MCF 10A (cell line): ENCODE measurements at regions of chr1 and their contacts with region 1.

Region 1: GRCh38 chr1:150259758-150260669 is 2.4 kb downstream of the CA14 start:
- DNase-seq: peak; percentile 89
- H3K4me3 Mint-ChIP-seq: peak overlapping the region; percentile 64
- H3K27ac Mint-ChIP-seq: peak overlapping the region; percentile 47
- H3K4me1 Mint-ChIP-seq: peaks cover 66% of the 10 kb centered on the region
- H3K27me3 Mint-ChIP-seq: no peaks in the 10 kb centered on the region
- CTCF ChIP-seq: no peak

Region 2: DNA sequence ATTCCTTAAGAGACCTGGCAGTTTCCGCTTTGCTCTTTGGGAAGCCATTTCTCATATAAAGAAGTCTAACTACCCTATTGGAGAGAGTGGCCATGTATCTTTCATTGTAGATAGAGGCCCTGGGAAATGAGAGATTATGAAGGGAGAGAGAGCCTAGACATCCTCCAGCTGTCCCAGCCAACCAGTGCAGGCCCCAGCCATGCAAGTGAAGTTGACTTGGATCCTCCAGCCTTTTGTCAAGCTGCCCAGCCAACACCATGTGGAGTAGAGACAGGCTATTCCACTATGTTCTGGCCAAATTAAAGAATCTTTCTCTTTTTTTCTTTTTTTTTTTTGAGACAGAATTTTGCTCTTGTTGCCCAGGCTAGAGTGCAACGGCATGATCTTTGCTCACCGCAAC is 17.0 kb before region 1 on chr1:
- CTCF ChIA-PET with region 1: interaction called, 34 read pairs
- POLR2A ChIA-PET with region 1: interaction called, 4 read pairs
- intact Hi-C with region 1: no loop called
- DNase-seq: no peak
- H3K4me3 Mint-ChIP-seq: no peak overlapping the region
- H3K27ac Mint-ChIP-seq: no peak overlapping the region
- H3K4me1 Mint-ChIP-seq: no peaks in the 10 kb centered on the region
- H3K27me3 Mint-ChIP-seq: no peaks in the 10 kb centered on the region
- CTCF ChIP-seq: no peak

Region 3: DNA sequence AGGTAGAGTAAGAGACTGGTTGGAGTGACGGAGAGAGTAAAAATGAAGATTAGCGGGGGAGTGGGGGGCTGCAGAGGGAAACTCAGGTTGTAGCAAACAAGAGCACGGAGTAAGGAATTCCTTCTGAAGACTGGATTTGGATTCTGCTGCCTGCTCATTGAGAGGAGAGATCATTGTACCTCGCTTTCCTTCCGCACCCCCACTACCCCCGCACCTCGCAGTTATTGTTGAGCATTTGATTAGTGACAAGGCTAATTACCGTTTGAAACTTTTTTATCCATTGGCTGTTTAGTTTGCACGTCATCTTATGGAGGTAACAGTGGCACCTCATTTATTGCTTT is 61.8 kb after region 1 on chr1:
- CTCF ChIA-PET with region 1: interaction called, 14 read pairs
- POLR2A ChIA-PET with region 1: interaction called, 15 read pairs
- intact Hi-C with region 1: loop called (anchors 2 kb)
- DNase-seq: no peak
- H3K4me3 Mint-ChIP-seq: peak overlapping the region; percentile 98
- H3K27ac Mint-ChIP-seq: peak overlapping the region; percentile 95
- H3K4me1 Mint-ChIP-seq: peaks cover 10% of the 10 kb centered on the region
- H3K27me3 Mint-ChIP-seq: no peaks in the 10 kb centered on the region
- CTCF ChIP-seq: no peak

Region 4: GRCh38 chr1:150529017-150529416 is 269.0 kb after region 1 on chr1:
- CTCF ChIA-PET with region 1: interaction called, 5 read pairs
- POLR2A ChIA-PET with region 1: interaction called, 3 read pairs
- intact Hi-C with region 1: loop called (anchors 1 kb)
- DNase-seq: peak; percentile 25
- H3K4me3 Mint-ChIP-seq: no peak overlapping the region
- H3K27ac Mint-ChIP-seq: no peak overlapping the region
- H3K4me1 Mint-ChIP-seq: peaks cover 13% of the 10 kb centered on the region
- H3K27me3 Mint-ChIP-seq: no peaks in the 10 kb centered on the region
- CTCF ChIP-seq: no peak

Region 5: DNA sequence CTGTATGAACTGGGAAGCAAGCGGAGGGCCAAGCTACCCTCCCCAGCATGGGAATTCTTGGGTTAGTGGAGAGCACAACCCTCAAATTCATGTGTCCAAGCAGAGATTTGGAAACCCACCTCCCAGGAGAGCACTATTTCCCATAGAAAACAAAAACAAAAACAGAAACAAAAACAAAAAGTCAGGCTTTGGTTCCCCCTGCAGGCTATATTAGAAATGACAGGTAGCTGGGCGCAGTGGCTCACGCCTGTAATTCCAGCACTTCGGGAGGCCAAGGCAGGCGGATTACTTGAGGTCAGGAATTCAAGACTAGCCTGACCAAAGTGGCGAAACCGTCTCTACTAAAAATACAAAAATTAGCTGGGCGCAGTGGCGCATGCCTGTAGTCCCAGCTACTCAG is 735.9 kb after region 1 on chr1:
- CTCF ChIA-PET with region 1: no interaction called
- POLR2A ChIA-PET with region 1: no interaction called
- intact Hi-C with region 1: loop called (anchors 1 kb)
- DNase-seq: peak; percentile 56
- H3K4me3 Mint-ChIP-seq: no peak overlapping the region
- H3K27ac Mint-ChIP-seq: no peak overlapping the region
- H3K4me1 Mint-ChIP-seq: peaks cover 5% of the 10 kb centered on the region
- H3K27me3 Mint-ChIP-seq: no peaks in the 10 kb centered on the region
- CTCF ChIP-seq: peak; percentile 96